Dorsolateral prefrontal cortex (tissue), 120 donors: ENCODE measurements at regions of chr10 and their contacts with region 1.

Region 1: GRCh38 chr10:132714096-132714721 is 71.7 kb downstream of the NKX6-2 start:
- DNase-seq: peak; percentile 41 to 93 (median 92)
- H3K4me3 ChIP-seq: peak overlapping the region in 40 of 59 donors; percentile 0 to 47 (median 28)
- H3K27ac ChIP-seq: peak overlapping the region; percentile 79 to 100 (median 96)
- H3K27me3 ChIP-seq: no peaks in the 10 kb centered on the region
- CTCF ChIP-seq: peak in 17 of 56 donors; percentile 8 to 35 (median 20)

Region 2: DNA sequence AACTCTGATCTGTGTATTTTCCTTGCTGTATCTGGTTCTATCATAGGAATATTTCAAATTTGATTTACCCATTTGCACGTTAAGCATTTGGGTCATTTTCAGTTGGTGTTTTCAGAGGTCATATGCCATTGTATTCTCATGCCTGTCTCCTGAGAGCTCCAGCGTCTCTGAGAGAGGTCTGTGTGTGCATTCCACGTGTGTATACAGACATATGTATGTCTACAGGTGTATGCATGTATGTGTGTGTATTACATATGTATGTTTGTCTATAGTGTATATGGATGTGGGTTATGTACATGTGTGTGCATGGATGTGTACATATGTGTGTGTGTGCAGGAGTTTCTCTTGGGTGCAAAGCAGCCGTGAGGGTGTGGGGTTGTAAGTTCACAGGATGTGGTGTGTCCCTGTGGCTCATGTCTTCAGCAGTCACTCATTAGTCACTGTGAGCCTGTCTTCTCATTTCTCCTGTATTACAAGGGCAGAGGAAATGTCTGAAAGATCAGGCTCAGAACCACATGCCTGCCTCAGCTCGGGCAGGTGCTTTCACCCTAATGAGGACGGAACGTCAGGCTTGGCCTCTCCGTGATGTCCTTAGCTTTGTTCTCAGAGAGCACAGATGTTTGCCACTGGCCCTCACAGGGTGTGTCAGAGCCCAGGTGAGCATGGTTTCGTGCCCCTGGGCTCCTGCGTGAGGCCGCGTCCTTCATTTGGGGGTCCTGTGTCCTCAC is 29.9 kb before region 1 on chr10:
- intact Hi-C with region 1: loop called in 1 of 2 experiments (anchors 1 kb)
- DNase-seq: peak in 9 of 10 donors; percentile 0 to 40 (median 27)
- H3K4me3 ChIP-seq: peak overlapping the region in 1 of 59 donors; percentile 21
- H3K27ac ChIP-seq: peak overlapping the region; percentile 76 to 100 (median 97)
- H3K27me3 ChIP-seq: no peaks in the 10 kb centered on the region
- CTCF ChIP-seq: no peak